CD8-positive, alpha-beta T cell (primary cell): ENCODE measurements at regions of chrX and their contacts with region 1.

Region 1: DNA sequence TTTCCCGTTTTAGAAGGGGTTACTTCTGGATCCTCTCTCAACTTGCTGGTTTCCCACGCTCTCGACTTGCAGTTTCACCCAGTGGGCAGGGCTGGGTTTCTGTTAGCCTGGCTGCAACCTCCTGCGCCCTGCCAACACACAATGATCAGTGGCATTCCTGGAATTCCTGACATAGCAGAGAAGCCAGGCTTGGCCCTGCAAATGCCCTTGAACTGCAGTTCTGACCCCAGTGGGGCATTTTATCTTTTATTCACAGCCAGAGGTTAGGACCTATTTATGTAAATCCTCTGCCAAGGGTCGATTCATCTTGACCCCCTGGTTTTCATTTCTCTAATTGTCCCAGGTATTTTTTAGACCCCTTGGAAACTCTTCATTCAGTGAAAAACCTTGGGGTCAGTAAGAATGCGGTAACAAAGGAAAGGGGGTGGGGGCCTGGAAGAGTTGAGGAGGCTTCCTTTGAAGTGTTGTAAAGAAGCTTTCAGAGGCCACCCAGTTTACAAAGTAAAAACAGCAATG is 217.6 kb downstream of the ZNF674 start:
- DNase-seq: no peak
- ATAC-seq: no peak
- H3K4me3 ChIP-seq: no peak overlapping the region
- H3K4me3 Mint-ChIP-seq: no peak overlapping the region
- H3K27ac ChIP-seq: no peak overlapping the region
- H3K27ac Mint-ChIP-seq: no peak overlapping the region
- H3K4me1 ChIP-seq: no peaks in the 10 kb centered on the region
- H3K4me1 Mint-ChIP-seq: peaks cover 7% of the 10 kb centered on the region
- H3K27me3 ChIP-seq: no peaks in the 10 kb centered on the region
- H3K27me3 Mint-ChIP-seq: no peaks in the 10 kb centered on the region
- CTCF ChIP-seq: no peak

Region 2: DNA sequence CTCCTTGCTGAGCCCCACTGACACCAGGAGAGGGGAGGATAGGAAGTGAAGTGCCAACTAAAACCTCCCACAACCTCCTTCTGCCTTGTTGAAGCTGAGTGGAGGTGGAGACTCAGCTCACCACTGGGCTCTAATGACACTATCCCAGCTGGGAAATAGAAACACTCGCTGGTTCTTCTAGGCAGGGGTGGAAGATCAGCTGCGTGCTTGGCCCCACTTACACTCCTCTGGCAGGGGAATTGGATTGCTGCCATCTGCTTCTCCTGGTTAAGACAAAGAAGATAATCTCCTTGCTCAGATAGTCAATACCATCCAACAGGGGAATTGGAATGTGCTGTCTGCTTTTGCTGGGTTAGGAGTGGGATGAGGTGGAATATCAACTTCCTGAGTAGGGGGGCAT is 174.9 kb before region 1 on chrX:
- CTCF ChIA-PET with region 1: no interaction called
- POLR2A ChIA-PET with region 1: no interaction called
- intact Hi-C with region 1: no loop called
- DNase-seq: no peak
- ATAC-seq: no peak
- H3K4me3 ChIP-seq: no peak overlapping the region
- H3K4me3 Mint-ChIP-seq: no peak overlapping the region
- H3K27ac ChIP-seq: no peak overlapping the region
- H3K27ac Mint-ChIP-seq: no peak overlapping the region
- H3K4me1 ChIP-seq: no peaks in the 10 kb centered on the region
- H3K4me1 Mint-ChIP-seq: no peaks in the 10 kb centered on the region
- H3K27me3 ChIP-seq: no peaks in the 10 kb centered on the region
- H3K27me3 Mint-ChIP-seq: no peaks in the 10 kb centered on the region
- CTCF ChIP-seq: no peak

Region 3: DNA sequence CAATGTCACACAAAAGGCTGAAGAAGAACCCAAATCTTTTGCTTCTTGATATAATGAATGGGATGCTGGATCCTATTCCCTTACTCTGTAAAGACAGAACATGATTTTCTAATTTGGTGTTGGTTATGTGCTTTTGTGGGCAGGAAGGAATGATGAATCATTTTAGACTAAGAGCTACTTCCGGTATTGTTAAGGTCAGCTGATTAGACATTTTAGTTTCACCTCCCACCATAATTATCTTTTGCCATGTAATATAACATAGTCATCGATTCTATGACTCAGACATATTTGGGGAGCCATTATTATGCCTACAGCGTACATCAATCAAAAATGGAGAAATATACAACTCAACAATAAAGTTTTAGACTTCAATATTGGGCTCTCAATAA is 47.7 kb before region 1 on chrX:
- CTCF ChIA-PET with region 1: no interaction called
- POLR2A ChIA-PET with region 1: no interaction called
- intact Hi-C with region 1: loop called in 1 of 2 experiments (anchors 2 kb)
- DNase-seq: no peak
- ATAC-seq: no peak
- H3K4me3 ChIP-seq: no peak overlapping the region
- H3K4me3 Mint-ChIP-seq: no peak overlapping the region
- H3K27ac ChIP-seq: no peak overlapping the region
- H3K27ac Mint-ChIP-seq: no peak overlapping the region
- H3K4me1 ChIP-seq: no peaks in the 10 kb centered on the region
- H3K4me1 Mint-ChIP-seq: peaks cover 9% of the 10 kb centered on the region
- H3K27me3 ChIP-seq: no peaks in the 10 kb centered on the region
- H3K27me3 Mint-ChIP-seq: no peaks in the 10 kb centered on the region
- CTCF ChIP-seq: no peak